Right ventricle myocardium inferior (tissue), 1 donor: ENCODE measurements at regions of chr14 and their contacts with region 1.

Region 1: GRCh38 chr14:89416002-89416995 is 734 bp downstream of the FOXN3 start:
- DNase-seq: peak; percentile 97
- ATAC-seq: peak; percentile 86

Region 2: GRCh38 chr14:89040460-89041259 is 375.6 kb before region 1 on chr14:
- intact Hi-C with region 1: loop called (anchors 2 kb)
- DNase-seq: peak; percentile 91
- ATAC-seq: peak; percentile 94

Region 3: GRCh38 chr14:89185919-89186855 is 230.1 kb before region 1 on chr14:
- intact Hi-C with region 1: loop called (anchors 1 kb)
- DNase-seq: no peak
- ATAC-seq: peak; percentile 43

Region 4: DNA sequence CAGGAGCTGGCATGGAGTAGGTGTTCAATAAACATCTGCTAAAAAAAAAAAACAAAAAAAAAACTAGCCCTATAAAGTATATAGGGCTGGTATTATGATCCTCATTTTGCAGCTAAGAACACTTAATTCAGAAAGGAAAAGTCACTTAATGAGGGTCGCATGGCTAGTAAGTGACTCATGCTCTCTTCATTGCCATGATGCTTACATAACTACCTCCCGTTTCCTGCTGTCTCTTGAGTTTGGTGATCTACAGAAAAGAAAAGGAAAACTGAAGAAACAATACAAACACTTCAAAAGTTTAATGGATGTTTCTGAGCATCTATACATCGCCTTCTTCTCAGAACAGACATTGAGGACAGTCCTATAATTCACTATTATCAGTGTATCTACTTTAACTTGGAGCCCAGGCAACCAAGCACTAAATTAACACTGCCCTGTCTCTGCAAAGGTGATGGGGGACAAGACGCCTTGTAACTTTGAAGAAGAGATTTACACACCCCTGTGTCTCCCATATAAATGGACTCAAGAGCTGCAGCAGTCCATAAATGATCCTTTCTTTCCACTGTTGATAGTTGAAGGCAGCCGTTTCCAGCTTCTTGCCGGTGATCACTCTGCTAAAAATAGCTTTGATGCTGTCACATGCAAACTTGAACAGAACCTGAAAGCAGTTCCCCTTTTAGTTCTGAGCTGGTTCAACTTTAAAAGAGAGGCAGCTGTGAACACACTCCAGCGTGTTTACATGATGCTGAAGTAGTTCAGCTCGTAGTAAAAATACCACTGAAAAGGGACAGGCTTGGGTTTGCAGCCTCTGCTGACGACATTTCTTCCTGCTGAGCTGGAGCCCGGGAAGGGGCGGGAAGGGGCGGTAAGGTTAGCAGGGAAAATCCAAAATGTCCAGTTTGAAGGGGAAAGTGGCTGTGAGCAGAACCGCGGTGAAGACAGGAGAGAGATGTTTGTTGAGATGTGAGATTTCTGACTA is 112.6 kb before region 1 on chr14:
- intact Hi-C with region 1: loop called (anchors 5 kb)
- DNase-seq: no peak
- ATAC-seq: peak; percentile 85

Region 5: GRCh38 chr14:89531661-89532335 is 115.5 kb after region 1 on chr14:
- intact Hi-C with region 1: no loop called
- DNase-seq: no peak
- ATAC-seq: no peak

Region 6: GRCh38 chr14:89564286-89564957 is 148.1 kb after region 1 on chr14:
- intact Hi-C with region 1: no loop called
- DNase-seq: no peak
- ATAC-seq: no peak

Region 7: GRCh38 chr14:89618811-89619551 is 202.7 kb after region 1 on chr14:
- intact Hi-C with region 1: loop called (anchors 5 kb)
- DNase-seq: peak; percentile 90
- ATAC-seq: peak; percentile 95

Region 8: DNA sequence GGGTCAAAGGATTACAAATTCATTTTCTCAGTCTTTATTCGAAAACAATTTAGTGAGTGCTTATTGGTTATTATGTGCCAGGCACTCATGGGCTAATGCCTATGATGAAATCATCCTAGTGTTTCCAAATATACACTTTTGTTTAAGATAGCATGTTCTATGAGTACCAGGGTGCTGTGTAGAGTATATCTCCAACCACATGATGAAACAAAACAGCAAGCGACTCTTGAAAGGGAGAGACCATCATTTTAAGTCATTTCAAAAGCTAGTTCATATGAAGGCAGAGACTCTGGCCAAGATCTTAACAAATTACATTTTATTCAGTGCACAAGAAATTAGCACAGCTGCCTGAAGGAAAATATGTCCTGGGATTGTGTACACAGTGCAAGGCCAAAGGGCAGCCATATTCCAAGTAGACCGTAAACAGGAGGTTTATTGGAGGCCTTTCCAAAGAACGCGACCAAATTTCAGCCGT is 334.0 kb after region 1 on chr14:
- intact Hi-C with region 1: no loop called
- DNase-seq: no peak
- ATAC-seq: peak; percentile 69

Region 9: GRCh38 chr14:89899917-89900663 is 483.8 kb after region 1 on chr14:
- intact Hi-C with region 1: loop called (anchors 10 kb)
- DNase-seq: no peak
- ATAC-seq: no peak